Aorta (tissue), 5 donors: ENCODE measurements at regions of chr6 and their contacts with region 1.

Region 1: DNA sequence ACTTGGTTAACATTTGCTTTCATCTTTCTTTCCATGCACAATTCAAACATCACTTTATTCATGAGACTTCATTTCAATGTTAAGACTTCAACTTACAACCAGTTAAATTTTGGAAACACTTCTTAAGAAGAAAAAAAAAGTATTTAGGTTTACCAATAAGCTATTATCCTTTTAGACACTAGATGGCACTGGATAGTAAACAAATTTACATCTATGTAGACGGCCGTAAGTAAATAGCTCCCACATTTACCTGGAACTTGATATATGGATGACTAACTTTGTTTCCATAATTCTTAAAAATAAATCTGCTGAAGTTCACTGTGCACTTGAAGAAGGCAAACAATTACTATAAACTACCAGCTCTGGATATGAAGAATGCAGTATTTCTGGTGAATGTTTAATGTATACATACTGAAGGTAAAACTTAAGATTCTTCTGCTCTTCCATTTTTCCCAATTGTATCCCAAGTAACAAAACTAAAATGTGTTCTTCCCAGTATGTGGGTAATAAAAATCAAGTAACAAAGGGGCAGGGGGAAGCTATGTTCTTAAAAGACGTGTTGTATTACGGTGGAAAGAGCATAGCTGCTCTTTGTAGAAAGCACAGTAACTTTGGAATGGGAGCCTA is 130.6 kb upstream of the C6orf118 start:
- DNase-seq: no peak
- ATAC-seq: no peak
- H3K4me3 ChIP-seq: no peak overlapping the region
- H3K27ac ChIP-seq: no peak overlapping the region
- H3K4me1 ChIP-seq: no peaks in the 10 kb centered on the region
- H3K27me3 ChIP-seq: no peaks in the 10 kb centered on the region

Region 2: GRCh38 chr6:165231581-165232561 is 208.2 kb before region 1 on chr6:
- intact Hi-C with region 1: no loop called
- DNase-seq: no peak
- ATAC-seq: no peak
- H3K4me3 ChIP-seq: no peak overlapping the region
- H3K27ac ChIP-seq: no peak overlapping the region
- H3K4me1 ChIP-seq: no peaks in the 10 kb centered on the region
- H3K27me3 ChIP-seq: no peaks in the 10 kb centered on the region

Region 3: DNA sequence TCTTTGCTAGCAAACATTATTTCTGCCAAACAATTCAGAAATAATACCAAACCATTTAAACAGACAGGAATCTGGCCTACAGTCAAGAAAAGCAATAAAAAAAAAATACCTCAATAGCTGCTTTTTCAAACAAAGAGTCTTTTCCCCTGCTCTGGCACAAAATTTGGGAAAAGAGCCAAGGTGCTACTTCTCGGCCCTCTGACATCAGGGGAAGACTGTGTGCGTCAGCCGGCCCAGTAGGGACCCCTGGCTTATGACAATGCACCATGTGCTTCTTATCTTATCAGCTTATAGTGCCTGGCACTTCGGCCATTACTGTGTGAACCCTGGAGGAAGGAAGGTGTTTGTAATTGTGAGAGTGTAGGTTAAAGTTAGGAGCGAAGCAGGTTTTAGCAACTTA is 133.6 kb after region 1 on chr6:
- intact Hi-C with region 1: no loop called
- DNase-seq: peak; percentile 44 to 58
- ATAC-seq: peak; percentile 86
- H3K4me3 ChIP-seq: no peak overlapping the region
- H3K27ac ChIP-seq: no peak overlapping the region
- H3K4me1 ChIP-seq: no peaks in the 10 kb centered on the region
- H3K27me3 ChIP-seq: no peaks in the 10 kb centered on the region

Region 4: DNA sequence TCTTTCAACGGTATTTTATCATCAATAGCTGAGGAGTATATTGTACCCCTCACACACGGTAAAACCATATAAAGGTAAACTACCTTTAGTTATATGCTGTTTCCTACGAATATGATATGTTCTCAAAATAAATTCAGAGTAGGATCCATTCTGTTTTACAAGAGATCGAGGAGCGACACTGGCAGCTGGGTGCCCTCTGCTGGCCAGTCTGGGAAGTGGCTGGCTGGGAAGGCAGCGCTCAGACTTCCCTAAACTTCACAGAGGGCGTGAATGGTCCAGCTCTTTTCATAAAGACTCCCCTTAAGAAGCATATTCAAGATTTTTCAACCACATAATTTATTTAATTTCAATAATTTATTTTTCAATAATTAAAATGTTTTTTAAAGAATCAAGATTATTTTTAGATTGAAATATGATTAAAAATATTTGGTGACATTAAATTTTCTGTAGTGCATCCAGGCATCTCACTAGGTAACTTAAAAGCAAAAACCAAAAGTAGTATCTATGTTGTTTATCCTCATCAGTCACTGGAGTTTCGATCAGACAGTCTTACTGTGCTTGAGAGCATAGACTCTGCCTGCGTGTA is 410.5 kb after region 1 on chr6:
- intact Hi-C with region 1: loop called (anchors 5 kb)
- DNase-seq: peak in 1 of 2 donors; percentile 74
- ATAC-seq: peak; percentile 82
- H3K4me3 ChIP-seq: no peak overlapping the region
- H3K27ac ChIP-seq: no peak overlapping the region
- H3K4me1 ChIP-seq: peaks cover 0 to 4% of the 10 kb centered on the region in 2 donors
- H3K27me3 ChIP-seq: no peaks in the 10 kb centered on the region